Activated CD8-positive, alpha-beta memory T cell treated with anti-CD3 and anti-CD28 coated beads, Interleukin-2, amount 10 ng/mL, durations not matched to agents 7 days and 5 days (primary cell): ENCODE measurements at regions of chr1 and their contacts with region 1.

Region 1: GRCh38 chr1:19074902-19075721 is 118.6 kb upstream of the IFFO2 start:
- DNase-seq: no peak
- ATAC-seq: peak; percentile 34
- H3K4me3 Mint-ChIP-seq: no peak overlapping the region
- H3K27ac Mint-ChIP-seq: peak overlapping the region; percentile 70
- H3K4me1 Mint-ChIP-seq: peaks cover 31% of the 10 kb centered on the region
- H3K27me3 Mint-ChIP-seq: no peaks in the 10 kb centered on the region

Region 2: GRCh38 chr1:18883636-18884418 is 191.3 kb before region 1 on chr1:
- CTCF ChIA-PET with region 1: interaction called, 13 read pairs
- DNase-seq: peak; percentile 78
- ATAC-seq: peak; percentile 69
- H3K4me3 Mint-ChIP-seq: no peak overlapping the region
- H3K27ac Mint-ChIP-seq: no peak overlapping the region
- H3K4me1 Mint-ChIP-seq: no peaks in the 10 kb centered on the region
- H3K27me3 Mint-ChIP-seq: no peaks in the 10 kb centered on the region